ENCODE measurements at regions of chr6 and their contacts with region 1.

Region 1: DNA sequence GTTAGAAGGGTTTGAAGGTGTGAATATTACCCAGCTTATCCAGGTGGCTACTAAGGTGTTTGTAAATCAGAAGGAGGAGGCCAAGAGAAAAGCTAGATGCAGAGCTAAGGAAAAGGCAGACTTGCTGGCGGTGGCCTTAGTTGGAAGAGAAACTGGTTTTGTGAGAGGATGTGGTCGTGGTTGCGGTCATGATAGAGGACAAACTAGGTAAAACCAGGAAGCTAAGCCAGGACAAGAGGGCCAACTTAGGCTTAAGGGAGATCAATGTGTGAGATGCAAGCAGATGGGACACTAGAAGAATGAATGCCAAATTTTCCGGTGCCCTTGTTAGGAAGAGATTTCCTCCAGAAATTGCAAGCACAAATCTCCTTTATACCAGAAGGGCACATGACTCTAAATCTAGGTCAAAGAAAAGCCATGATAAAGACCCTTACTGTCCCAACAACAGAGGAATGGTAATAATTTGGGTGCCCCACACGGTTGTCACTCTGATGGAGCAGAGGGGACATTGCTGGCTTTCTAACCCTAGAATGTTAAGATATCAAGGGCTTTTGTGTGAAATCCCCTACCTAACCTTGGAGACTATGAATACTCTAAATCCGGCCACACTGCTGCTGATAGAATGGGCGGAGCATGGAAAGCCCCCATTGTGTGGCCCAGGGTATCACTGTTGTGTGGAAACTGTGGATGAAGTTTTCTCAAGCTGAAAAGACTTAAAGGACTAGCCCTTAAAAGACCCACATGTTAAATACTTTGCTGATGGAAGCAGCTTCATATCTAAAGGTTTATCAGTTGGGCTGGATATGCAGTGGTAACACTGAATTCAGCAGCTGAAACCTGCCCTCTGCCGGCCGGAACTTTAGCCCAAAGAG is 7.8 kb downstream of the IL22RA2 start:
- DNase-seq: peak; percentile 85
- ATAC-seq: peak; percentile 86
- H3K4me3 ChIP-seq: no peak overlapping the region
- H3K27ac ChIP-seq: peak overlapping the region; percentile 93
- H3K4me1 ChIP-seq: peaks cover 37% of the 10 kb centered on the region
- H3K27me3 ChIP-seq: no peaks in the 10 kb centered on the region
- CTCF ChIP-seq: peak; percentile 57 to 81 (median 58)
- EP300 ChIP-seq: 0 out of 4 replicates have a peak, but pooled peaks of 1 of the 2 experiments have one; percentile 47
- POLR2A ChIP-seq: no peak
- RAD21 ChIP-seq: peak; percentile 95

Region 2: GRCh38 chr6:137089305-137089704 is 76.3 kb before region 1 on chr6:
- CTCF ChIA-PET with region 1: interaction called, 160 read pairs
- POLR2A ChIA-PET with region 1: interaction called, 62 read pairs
- RAD21 ChIA-PET with region 1: interaction called, 500 read pairs
- SMC1A ChIA-PET with region 1: interaction called, 293 read pairs
- in situ Hi-C with region 1: no loop called
- intact Hi-C with region 1: loop called (anchors 1 kb)
- DNase-seq: no peak
- ATAC-seq: no peak
- H3K4me3 ChIP-seq: no peak overlapping the region
- H3K27ac ChIP-seq: no peak overlapping the region
- H3K4me1 ChIP-seq: peaks cover 39% of the 10 kb centered on the region
- H3K27me3 ChIP-seq: no peaks in the 10 kb centered on the region
- CTCF ChIP-seq: no peak
- EP300 ChIP-seq: no peak
- POLR2A ChIP-seq: no peak
- RAD21 ChIP-seq: no peak

Region 3: DNA sequence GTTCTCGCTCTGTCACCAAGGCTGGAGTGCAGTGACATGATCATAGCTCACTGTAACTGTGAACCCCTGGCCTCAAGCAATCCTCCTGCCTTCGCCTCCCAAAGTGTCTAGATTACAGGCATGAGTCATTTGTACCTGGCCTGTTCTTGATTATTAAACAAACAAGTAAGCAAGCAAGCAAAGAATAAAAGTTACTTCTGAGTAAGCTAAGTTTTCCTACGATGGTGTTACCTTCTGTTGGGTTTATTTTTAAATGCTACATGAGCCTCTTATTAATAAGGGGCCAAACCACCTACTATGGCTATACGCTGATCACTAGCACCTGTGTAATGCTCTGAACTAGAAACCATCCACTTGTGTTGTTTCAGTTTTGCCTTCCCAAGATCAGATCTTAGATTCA is 43.0 kb before region 1 on chr6:
- CTCF ChIA-PET with region 1: interaction called, 20 read pairs
- POLR2A ChIA-PET with region 1: interaction called, 4 read pairs
- RAD21 ChIA-PET with region 1: interaction called, 44 read pairs
- SMC1A ChIA-PET with region 1: interaction called, 45 read pairs
- in situ Hi-C with region 1: no loop called
- intact Hi-C with region 1: loop called (anchors 1 kb)
- DNase-seq: no peak
- ATAC-seq: peak; percentile 74
- H3K4me3 ChIP-seq: no peak overlapping the region
- H3K27ac ChIP-seq: peak overlapping the region; percentile 91
- H3K4me1 ChIP-seq: peaks cover 35% of the 10 kb centered on the region
- H3K27me3 ChIP-seq: no peaks in the 10 kb centered on the region
- CTCF ChIP-seq: no peak
- EP300 ChIP-seq: no peak
- POLR2A ChIP-seq: no peak
- RAD21 ChIP-seq: peak; percentile 12; the same call in 1 of the 2 replicates

Region 4: GRCh38 chr6:137202078-137202477 is 36.5 kb after region 1 on chr6:
- CTCF ChIA-PET with region 1: interaction called, 3 read pairs
- POLR2A ChIA-PET with region 1: interaction called, 4 read pairs
- RAD21 ChIA-PET with region 1: interaction called, 5 read pairs
- SMC1A ChIA-PET with region 1: interaction called, 11 read pairs
- in situ Hi-C with region 1: no loop called
- intact Hi-C with region 1: no loop called
- DNase-seq: no peak
- ATAC-seq: peak; percentile 49
- H3K4me3 ChIP-seq: no peak overlapping the region
- H3K27ac ChIP-seq: no peak overlapping the region
- H3K4me1 ChIP-seq: peaks cover 18% of the 10 kb centered on the region; the same call in 1 of the 2 replicates
- H3K27me3 ChIP-seq: no peaks in the 10 kb centered on the region
- CTCF ChIP-seq: peak; percentile 1 to 62 (median 28); a peak in 5 of 6 replicates
- EP300 ChIP-seq: no peak
- POLR2A ChIP-seq: no peak
- RAD21 ChIP-seq: peak; percentile 85

Region 5: DNA sequence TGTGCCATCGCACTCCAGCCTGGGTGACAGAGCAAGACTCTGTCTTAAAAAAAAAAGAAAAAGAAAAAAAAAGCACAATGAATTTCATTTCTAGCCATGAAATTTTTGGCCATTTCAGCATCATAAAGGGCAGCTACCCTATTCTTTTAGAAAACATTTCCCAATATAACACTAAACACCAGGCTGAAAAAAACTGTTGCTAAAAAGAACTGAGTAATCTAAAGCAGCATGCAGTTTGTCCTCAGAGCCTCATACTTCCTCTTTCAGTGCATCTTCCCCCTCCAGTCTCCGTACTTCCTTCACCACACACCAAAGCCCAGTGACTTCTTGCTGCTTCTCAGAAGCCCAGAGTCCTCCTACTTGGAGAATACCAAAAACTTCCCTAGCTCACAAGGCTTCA is 59.2 kb after region 1 on chr6:
- CTCF ChIA-PET with region 1: interaction called, 3 read pairs
- POLR2A ChIA-PET with region 1: interaction called, 6 read pairs
- RAD21 ChIA-PET with region 1: interaction called, 44 read pairs
- SMC1A ChIA-PET with region 1: interaction called, 14 read pairs
- in situ Hi-C with region 1: no loop called
- intact Hi-C with region 1: loop called (anchors 2 kb)
- DNase-seq: peak; percentile 70
- ATAC-seq: peak; percentile 76
- H3K4me3 ChIP-seq: no peak overlapping the region
- H3K27ac ChIP-seq: peak overlapping the region; percentile 84
- H3K4me1 ChIP-seq: peaks cover 67% of the 10 kb centered on the region
- H3K27me3 ChIP-seq: no peaks in the 10 kb centered on the region
- CTCF ChIP-seq: no peak
- EP300 ChIP-seq: 0 out of 4 replicates have a peak, but pooled peaks of 1 of the 2 experiments have one; percentile 48
- POLR2A ChIP-seq: no peak
- RAD21 ChIP-seq: no peak

Region 6: DNA sequence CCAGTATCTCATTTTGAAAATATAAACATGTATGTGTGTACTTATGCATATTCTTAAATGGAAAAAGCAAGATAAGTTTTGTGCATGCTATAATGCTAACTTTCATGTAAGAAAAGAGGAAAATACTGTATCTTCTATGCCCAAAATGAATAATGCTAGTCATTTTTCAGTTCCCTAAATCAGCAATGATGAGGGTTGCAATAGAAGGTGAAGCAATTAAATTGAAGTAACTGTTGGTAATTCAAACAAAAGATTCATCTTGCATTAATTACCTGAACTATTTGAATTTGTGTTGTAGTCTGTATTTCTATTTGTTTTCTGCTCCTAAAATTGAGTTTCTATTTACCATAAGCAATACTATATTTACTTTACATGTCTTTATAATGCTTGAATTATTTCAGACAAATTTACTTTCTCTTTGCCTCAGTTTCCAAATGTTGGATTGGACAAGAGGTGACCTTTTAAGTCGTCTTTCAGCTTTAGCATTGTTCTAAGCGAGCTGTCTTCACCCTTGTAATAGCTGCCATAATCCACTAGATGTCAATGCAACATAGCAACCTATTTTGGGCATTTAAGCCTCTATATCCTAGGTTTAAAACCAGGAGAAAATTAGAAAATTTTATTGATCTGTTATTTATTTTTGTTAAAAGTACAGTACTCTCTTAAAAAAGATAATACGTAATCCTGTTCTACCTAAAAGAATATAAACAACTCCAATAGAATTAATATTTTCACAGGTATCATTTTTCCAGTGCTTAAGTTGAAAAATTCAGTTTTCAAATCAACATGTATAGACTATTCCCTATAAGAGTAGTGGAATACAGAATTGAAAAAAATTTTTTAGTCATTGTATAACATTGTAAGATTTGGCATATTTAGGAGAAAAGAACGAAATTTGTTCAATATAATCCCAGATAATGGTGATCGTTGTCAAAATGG is 105.9 kb after region 1 on chr6:
- CTCF ChIA-PET with region 1: interaction called, 17 read pairs
- POLR2A ChIA-PET with region 1: no interaction called
- RAD21 ChIA-PET with region 1: interaction called, 23 read pairs
- SMC1A ChIA-PET with region 1: interaction called, 28 read pairs
- in situ Hi-C with region 1: no loop called
- intact Hi-C with region 1: no loop called
- DNase-seq: no peak
- ATAC-seq: peak; percentile 92
- H3K4me3 ChIP-seq: no peak overlapping the region
- H3K27ac ChIP-seq: no peak overlapping the region
- H3K4me1 ChIP-seq: peaks cover 3% of the 10 kb centered on the region
- H3K27me3 ChIP-seq: no peaks in the 10 kb centered on the region
- CTCF ChIP-seq: peak; percentile 80 to 91 (median 85)
- EP300 ChIP-seq: no peak
- POLR2A ChIP-seq: no peak
- RAD21 ChIP-seq: peak; percentile 100

Measured in GM12878 (cell line).